ENCODE measurements at regions of chr7 and their contacts with region 1.

Region 1: GRCh38 chr7:26278770-26279169 is 12.9 kb upstream of the SNX10 start:
- DNase-seq: peak; percentile 70
- H3K4me3 ChIP-seq: no peak overlapping the region
- H3K27ac ChIP-seq: no peak overlapping the region
- H3K4me1 ChIP-seq: no peaks in the 10 kb centered on the region
- CTCF ChIP-seq: peak; percentile 96

Region 2: GRCh38 chr7:26365077-26365900 is 86.5 kb after region 1 on chr7:
- CTCF ChIA-PET with region 1: no interaction called
- POLR2A ChIA-PET with region 1: interaction called, 5 read pairs
- intact Hi-C with region 1: loop called (anchors 1 kb)
- DNase-seq: peak; percentile 89
- H3K4me3 ChIP-seq: no peak overlapping the region
- H3K27ac ChIP-seq: peak overlapping the region; percentile 29
- H3K4me1 ChIP-seq: peaks cover 21% of the 10 kb centered on the region
- CTCF ChIP-seq: peak; percentile 93

Measured in OCI-LY7 (cell line).